ENCODE measurements at regions of chr2 and their contacts with region 1.

Region 1: GRCh38 chr2:196750982-196751635 is 48.4 kb downstream of the GTF3C3 start:
- DNase-seq: peak; percentile 83
- H3K4me3 Mint-ChIP-seq: no peak overlapping the region
- H3K27ac Mint-ChIP-seq: no peak overlapping the region
- H3K4me1 Mint-ChIP-seq: peaks cover 9% of the 10 kb centered on the region
- H3K27me3 Mint-ChIP-seq: no peaks in the 10 kb centered on the region

Region 2: DNA sequence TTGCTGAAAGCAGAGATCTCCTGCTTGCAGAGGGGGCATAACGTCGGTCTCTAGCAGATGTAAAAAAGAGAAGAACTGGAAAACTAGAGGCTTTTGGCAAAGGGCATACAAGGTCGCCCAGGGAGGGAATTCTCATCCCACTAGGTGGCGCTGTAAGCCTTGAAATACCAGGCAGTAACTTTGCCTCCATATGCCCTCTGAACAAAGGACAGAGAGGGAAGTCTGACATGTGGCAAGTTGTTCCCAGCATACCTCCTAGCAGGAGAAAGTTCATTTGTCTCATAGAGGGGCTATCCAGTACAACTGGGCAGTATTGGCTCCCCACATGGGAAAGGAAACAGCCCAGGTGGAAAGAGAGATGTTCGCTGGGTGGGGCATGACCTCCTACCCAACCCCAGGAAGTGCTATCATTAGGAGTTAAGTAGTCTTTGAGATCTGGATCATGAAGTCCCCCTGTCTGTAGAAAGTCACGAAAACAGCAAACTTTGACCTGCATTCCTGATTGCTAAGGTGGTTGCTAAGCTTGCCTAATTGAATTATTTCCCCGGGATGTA is 619.6 kb before region 1 on chr2:
- CTCF ChIA-PET with region 1: no interaction called
- intact Hi-C with region 1: loop called (anchors 10 kb)
- DNase-seq: peak; percentile 70
- H3K4me3 Mint-ChIP-seq: no peak overlapping the region
- H3K27ac Mint-ChIP-seq: peak overlapping the region; percentile 70
- H3K4me1 Mint-ChIP-seq: peaks cover 12% of the 10 kb centered on the region
- H3K27me3 Mint-ChIP-seq: no peaks in the 10 kb centered on the region

Region 3: DNA sequence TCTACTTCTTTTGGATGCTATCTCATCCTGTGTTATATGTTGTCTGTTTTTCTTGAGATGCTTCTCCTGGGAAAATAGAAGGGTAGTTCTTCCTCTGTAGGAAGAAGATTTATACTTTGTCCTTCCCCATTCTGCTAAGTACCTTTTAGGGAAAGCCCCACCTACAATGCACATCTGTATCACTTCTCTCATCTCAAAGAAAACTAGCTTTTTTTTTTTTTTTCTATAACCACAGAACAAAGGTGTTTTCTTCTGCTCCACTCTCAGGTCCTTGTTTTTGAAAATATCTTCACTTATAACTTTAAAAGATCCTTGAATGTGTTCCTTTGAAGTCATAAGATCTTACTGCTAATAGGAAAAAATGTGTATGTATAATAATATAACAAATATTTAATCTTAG is 80.8 kb before region 1 on chr2:
- CTCF ChIA-PET with region 1: no interaction called
- intact Hi-C with region 1: no loop called
- DNase-seq: no peak
- H3K4me3 Mint-ChIP-seq: no peak overlapping the region
- H3K27ac Mint-ChIP-seq: no peak overlapping the region
- H3K4me1 Mint-ChIP-seq: peaks cover 2% of the 10 kb centered on the region
- H3K27me3 Mint-ChIP-seq: no peaks in the 10 kb centered on the region

Region 4: DNA sequence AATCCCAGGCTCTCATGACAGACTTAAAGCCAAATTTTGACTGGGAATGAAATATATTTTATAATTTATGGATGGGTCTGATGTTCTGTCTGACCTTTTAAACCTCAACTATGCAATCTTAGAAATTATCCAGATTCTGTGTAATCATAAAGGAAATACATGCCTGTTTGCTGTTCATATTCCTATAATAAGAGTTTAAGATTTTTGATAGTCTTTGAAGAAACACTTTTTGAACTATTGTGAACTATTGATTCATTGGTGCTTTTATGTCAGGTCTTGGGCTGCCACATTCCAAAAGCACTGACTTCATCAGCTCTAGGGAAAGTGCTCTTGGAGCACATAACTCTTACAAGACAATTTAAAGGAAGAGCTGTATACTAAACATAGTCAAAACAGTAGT is 47.4 kb before region 1 on chr2:
- CTCF ChIA-PET with region 1: no interaction called
- intact Hi-C with region 1: no loop called
- DNase-seq: no peak
- H3K4me3 Mint-ChIP-seq: no peak overlapping the region
- H3K27ac Mint-ChIP-seq: no peak overlapping the region
- H3K4me1 Mint-ChIP-seq: no peaks in the 10 kb centered on the region
- H3K27me3 Mint-ChIP-seq: no peaks in the 10 kb centered on the region

Region 5: DNA sequence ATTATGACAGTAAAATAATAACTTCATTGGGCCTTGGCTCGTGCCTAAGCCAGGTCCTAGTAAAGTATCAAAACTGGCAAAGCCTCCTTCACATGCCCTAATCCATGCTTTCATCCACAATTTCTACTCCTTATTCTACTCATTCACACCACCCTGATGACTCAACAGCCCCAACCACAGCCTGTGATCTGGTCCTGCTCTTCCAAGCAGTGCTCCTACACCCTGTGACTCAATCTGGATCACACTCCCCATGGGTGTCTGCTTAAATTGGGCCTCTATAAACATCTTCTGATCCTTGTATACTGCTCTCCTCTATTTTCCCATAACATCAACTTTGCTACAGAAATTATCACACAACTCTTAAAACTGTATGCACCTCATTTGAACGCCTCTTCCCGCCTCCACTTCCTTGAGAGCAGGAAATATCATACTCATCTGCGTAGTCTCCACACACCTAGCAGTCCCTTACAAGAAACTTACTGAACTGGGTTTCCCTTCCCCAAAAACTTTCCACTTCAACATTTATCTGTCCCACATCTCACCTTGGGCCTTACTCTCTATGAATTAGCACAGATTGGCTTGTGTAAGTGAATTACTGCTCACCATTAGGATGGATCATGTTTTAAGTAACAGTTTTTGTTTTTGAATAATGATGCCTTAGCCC is 32.5 kb after region 1 on chr2:
- CTCF ChIA-PET with region 1: interaction called, 5 read pairs
- intact Hi-C with region 1: loop called (anchors 1 kb)
- DNase-seq: peak; percentile 74
- H3K4me3 Mint-ChIP-seq: no peak overlapping the region
- H3K27ac Mint-ChIP-seq: peak overlapping the region; percentile 79
- H3K4me1 Mint-ChIP-seq: peaks cover 17% of the 10 kb centered on the region
- H3K27me3 Mint-ChIP-seq: no peaks in the 10 kb centered on the region

Region 6: GRCh38 chr2:197042739-197043196 is 291.7 kb after region 1 on chr2:
- CTCF ChIA-PET with region 1: no interaction called
- intact Hi-C with region 1: loop called (anchors 1 kb)
- DNase-seq: peak; percentile 45
- H3K4me3 Mint-ChIP-seq: no peak overlapping the region
- H3K27ac Mint-ChIP-seq: peak overlapping the region; percentile 85
- H3K4me1 Mint-ChIP-seq: peaks cover 35% of the 10 kb centered on the region
- H3K27me3 Mint-ChIP-seq: no peaks in the 10 kb centered on the region

Region 7: GRCh38 chr2:197777823-197778407 is 1026.8 kb after region 1 on chr2:
- CTCF ChIA-PET with region 1: no interaction called
- intact Hi-C with region 1: loop called (anchors 5 kb)
- DNase-seq: peak; percentile 52
- H3K4me3 Mint-ChIP-seq: no peak overlapping the region
- H3K27ac Mint-ChIP-seq: no peak overlapping the region
- H3K4me1 Mint-ChIP-seq: no peaks in the 10 kb centered on the region
- H3K27me3 Mint-ChIP-seq: peaks cover 5% of the 10 kb centered on the region